IMR-90 (cell line): ENCODE measurements at regions of chr19 and their contacts with region 1.

Region 1: GRCh38 chr19:2151339-2152229 is at the start of gene AP3D1:
- DNase-seq: peak; percentile 100
- ATAC-seq: peak; percentile 95
- H3K4me3 ChIP-seq: peak within 1 kb of the TSS; percentile 99
- H3K27ac ChIP-seq: peak within 1 kb of the TSS; percentile 97
- H3K4me1 ChIP-seq: peaks cover 10% of the 10 kb centered on the region
- H3K27me3 ChIP-seq: no peaks in the 10 kb centered on the region
- CTCF ChIP-seq: no peak
- POLR2A ChIP-seq: peak; percentile 52; the same call in 1 of the 2 replicates
- RAD21 ChIP-seq: no peak
- total RNA-seq, gene AP3D1: 75.3 and 76.1 TPM in 2 replicates

Region 2: DNA sequence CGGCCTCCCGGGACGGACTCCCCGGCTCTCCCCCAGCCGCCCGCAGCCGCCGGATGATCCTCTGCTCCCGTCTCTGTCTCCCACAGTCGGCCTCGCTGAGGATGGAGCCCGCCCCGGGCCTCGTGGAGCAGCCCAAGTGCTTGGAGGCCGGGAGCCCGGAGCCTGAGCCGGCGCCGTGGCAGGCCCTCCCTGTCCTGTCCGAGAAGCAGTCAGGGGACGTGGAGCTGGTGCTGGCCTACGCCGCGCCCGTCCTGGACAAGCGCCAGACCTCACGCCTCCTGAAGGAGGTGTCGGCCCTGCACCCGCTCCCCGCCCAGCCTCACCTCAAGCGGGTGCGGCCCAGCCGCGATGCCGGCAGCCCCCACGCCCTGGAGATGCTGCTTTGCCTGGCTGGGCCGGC is 239.6 kb before region 1 on chr19:
- CTCF ChIA-PET with region 1: no interaction called
- POLR2A ChIA-PET with region 1: no interaction called
- dilution Hi-C with region 1: no loop called
- in situ Hi-C with region 1: no loop called
- intact Hi-C with region 1: no loop called
- DNase-seq: no peak
- ATAC-seq: no peak
- H3K4me3 ChIP-seq: no peak overlapping the region
- H3K27ac ChIP-seq: no peak overlapping the region
- H3K4me1 ChIP-seq: peaks cover 7% of the 10 kb centered on the region
- H3K27me3 ChIP-seq: no peaks in the 10 kb centered on the region
- CTCF ChIP-seq: no peak
- POLR2A ChIP-seq: no peak
- RAD21 ChIP-seq: no peak

Region 3: GRCh38 chr19:2016041-2016807 is 135.4 kb before region 1 on chr19:
- CTCF ChIA-PET with region 1: no interaction called
- POLR2A ChIA-PET with region 1: no interaction called
- dilution Hi-C with region 1: no loop called
- in situ Hi-C with region 1: no loop called
- intact Hi-C with region 1: loop called (anchors 5 kb)
- DNase-seq: peak; percentile 81
- ATAC-seq: peak; percentile 83
- H3K4me3 ChIP-seq: peak overlapping the region; percentile 30
- H3K27ac ChIP-seq: no peak overlapping the region
- H3K4me1 ChIP-seq: peaks cover 14% of the 10 kb centered on the region
- H3K27me3 ChIP-seq: no peaks in the 10 kb centered on the region
- CTCF ChIP-seq: no peak
- POLR2A ChIP-seq: no peak
- RAD21 ChIP-seq: no peak

Region 4: GRCh38 chr19:2097330-2098283 is 54.0 kb before region 1 on chr19:
- CTCF ChIA-PET with region 1: no interaction called
- POLR2A ChIA-PET with region 1: no interaction called
- dilution Hi-C with region 1: no loop called
- in situ Hi-C with region 1: no loop called
- intact Hi-C with region 1: no loop called
- DNase-seq: no peak
- ATAC-seq: no peak
- H3K4me3 ChIP-seq: no peak overlapping the region
- H3K27ac ChIP-seq: no peak overlapping the region
- H3K4me1 ChIP-seq: peaks cover 6% of the 10 kb centered on the region
- H3K27me3 ChIP-seq: no peaks in the 10 kb centered on the region
- CTCF ChIP-seq: no peak
- POLR2A ChIP-seq: no peak
- RAD21 ChIP-seq: no peak

Region 5: DNA sequence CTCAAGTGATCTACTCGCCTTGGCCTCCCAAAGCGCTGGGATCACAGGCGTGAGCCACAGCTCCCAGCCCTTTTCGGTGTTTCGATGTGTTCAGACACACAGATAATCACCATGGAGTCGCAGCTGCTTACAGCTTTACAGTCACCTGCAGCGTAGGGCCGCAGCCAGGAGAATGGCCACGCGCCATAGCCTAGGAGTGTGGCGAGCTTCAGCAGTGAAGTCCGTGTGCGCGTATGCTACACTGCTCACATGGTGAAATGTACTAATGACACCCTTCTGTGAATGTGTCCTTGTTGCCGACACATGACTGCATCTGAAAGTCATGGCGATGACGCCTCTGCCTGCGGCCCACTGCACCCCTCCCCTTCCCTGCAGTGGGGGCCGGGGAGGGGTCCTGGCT is 23.8 kb before region 1 on chr19:
- CTCF ChIA-PET with region 1: no interaction called
- POLR2A ChIA-PET with region 1: no interaction called
- dilution Hi-C with region 1: no loop called
- in situ Hi-C with region 1: no loop called
- intact Hi-C with region 1: no loop called
- DNase-seq: no peak
- ATAC-seq: no peak
- H3K4me3 ChIP-seq: no peak overlapping the region
- H3K27ac ChIP-seq: no peak overlapping the region
- H3K4me1 ChIP-seq: no peaks in the 10 kb centered on the region
- H3K27me3 ChIP-seq: no peaks in the 10 kb centered on the region
- CTCF ChIP-seq: no peak
- POLR2A ChIP-seq: no peak
- RAD21 ChIP-seq: no peak

Region 6: DNA sequence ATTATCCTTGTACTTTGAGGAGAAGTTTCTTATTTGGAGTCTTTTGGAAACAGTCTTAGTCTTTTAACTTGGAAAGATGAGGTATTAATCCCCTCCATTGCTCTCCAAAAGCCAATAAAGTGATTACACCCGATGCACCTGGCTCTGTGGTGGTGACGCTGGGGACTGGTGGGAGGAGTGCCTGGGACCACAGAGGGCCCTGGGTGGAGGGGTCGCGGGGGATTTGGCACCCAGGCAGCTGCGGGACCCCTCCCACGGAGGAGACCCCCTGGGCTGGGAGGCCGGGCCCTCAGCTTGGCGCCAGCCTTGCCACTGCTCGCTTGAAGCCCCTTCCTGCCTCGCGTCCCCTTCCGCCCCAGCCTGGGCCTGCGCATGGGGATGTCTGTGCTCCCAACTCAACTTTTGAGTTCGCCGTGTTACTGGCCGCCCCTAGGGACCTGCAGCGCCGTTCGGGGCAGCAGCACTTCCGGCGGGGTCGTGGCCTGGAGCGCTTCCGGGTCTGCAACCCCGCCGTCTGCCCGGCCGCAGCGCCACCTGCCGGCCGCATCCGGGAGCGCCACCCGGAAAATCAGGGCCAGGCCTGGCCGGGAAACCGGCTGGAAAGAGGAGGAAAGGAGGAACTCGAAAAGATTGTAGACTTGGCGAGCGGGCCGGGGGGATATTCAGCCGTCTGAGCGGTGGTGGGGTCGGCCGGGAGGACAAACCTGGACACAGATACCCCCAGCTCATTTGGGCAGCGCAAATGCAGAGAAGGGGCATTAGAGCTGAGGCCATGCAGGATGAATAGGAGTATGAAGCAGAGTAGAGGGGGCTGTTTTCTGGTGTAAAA is 122.0 kb after region 1 on chr19:
- CTCF ChIA-PET with region 1: interaction called, 4 read pairs
- POLR2A ChIA-PET with region 1: interaction called, 4 read pairs
- dilution Hi-C with region 1: no loop called
- in situ Hi-C with region 1: no loop called
- intact Hi-C with region 1: loop called (anchors 5 kb)
- DNase-seq: peak; percentile 52
- ATAC-seq: peak; percentile 5
- H3K4me3 ChIP-seq: no peak overlapping the region
- H3K27ac ChIP-seq: peak overlapping the region; percentile 16; the same call in 1 of the 2 replicates
- H3K4me1 ChIP-seq: peaks cover 14% of the 10 kb centered on the region
- H3K27me3 ChIP-seq: no peaks in the 10 kb centered on the region
- CTCF ChIP-seq: peak; percentile 88
- POLR2A ChIP-seq: no peak
- RAD21 ChIP-seq: peak; percentile 60

Region 7: DNA sequence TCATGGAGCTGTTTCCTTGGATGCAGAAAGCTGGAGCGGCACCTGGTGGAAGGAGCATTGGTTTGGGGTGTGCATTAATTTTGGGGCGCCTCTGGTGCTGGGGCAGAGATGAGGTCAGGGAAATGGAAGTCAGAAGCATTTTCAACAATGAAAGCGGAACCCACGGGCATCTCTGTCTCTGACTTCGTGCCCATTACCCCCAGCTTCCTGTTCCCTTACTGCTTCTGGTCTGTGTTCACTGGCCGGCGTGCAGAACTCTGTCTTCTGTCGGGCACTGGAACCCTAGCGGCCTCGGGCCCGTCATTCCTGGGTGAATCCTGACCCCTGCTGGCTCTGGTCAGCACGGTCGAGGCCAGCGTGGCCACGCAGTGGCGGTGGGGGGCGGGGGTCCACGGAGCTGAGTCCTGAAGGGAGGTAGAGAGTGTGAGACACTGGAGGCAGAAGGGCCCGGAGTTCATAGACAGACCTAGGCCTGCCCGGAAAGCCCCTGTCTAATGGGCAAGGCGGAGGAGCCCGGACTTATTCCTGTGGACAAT is 164.3 kb after region 1 on chr19:
- CTCF ChIA-PET with region 1: interaction called, 6 read pairs
- POLR2A ChIA-PET with region 1: no interaction called
- dilution Hi-C with region 1: no loop called
- in situ Hi-C with region 1: loop called (anchors 10 kb)
- intact Hi-C with region 1: loop called (anchors 1 kb)
- DNase-seq: peak; percentile 56
- ATAC-seq: peak; percentile 99
- H3K4me3 ChIP-seq: no peak overlapping the region
- H3K27ac ChIP-seq: no peak overlapping the region
- H3K4me1 ChIP-seq: no peaks in the 10 kb centered on the region
- H3K27me3 ChIP-seq: peaks cover 6% of the 10 kb centered on the region
- CTCF ChIP-seq: peak; percentile 83
- POLR2A ChIP-seq: no peak
- RAD21 ChIP-seq: peak; percentile 87